ENCODE measurements at regions of chr2 and their contacts with region 1.

Region 1: DNA sequence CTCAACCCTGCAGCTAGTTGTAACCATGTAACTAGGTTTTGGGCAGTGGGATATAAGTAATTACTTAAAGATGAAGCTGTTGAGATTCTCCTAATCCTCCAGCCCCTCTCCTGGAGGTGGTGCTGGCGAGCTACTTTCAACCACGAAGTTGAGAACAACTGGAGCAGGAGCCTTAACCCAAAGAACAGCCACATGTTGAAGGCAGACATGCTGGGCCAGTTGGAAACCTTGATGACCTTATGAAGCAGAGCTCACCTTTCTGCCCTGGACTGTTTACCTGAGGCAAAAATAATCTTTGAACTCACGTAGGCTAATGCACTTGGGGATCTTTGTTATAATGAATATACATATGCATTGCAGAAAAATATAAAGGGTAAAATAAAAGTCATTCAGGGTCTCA is 89.6 kb upstream of the NPAS2 start:
- DNase-seq: peak; percentile 34
- H3K4me3 ChIP-seq: no peak overlapping the region
- H3K27ac ChIP-seq: no peak overlapping the region
- H3K27me3 ChIP-seq: peaks cover 6% of the 10 kb centered on the region
- CTCF ChIP-seq: peak; percentile 90

Region 2: GRCh38 chr2:100610381-100610831 is 119.9 kb before region 1 on chr2:
- CTCF ChIA-PET with region 1: interaction called, 15 read pairs
- POLR2A ChIA-PET with region 1: no interaction called
- DNase-seq: peak; percentile 15
- H3K4me3 ChIP-seq: no peak overlapping the region
- H3K27ac ChIP-seq: no peak overlapping the region
- H3K27me3 ChIP-seq: peaks cover 4% of the 10 kb centered on the region
- CTCF ChIP-seq: peak; percentile 74

Region 3: GRCh38 chr2:100692381-100692780 is 38.0 kb before region 1 on chr2:
- CTCF ChIA-PET with region 1: no interaction called
- POLR2A ChIA-PET with region 1: no interaction called
- DNase-seq: no peak
- H3K4me3 ChIP-seq: no peak overlapping the region
- H3K27ac ChIP-seq: no peak overlapping the region
- H3K27me3 ChIP-seq: peaks cover 11% of the 10 kb centered on the region
- CTCF ChIP-seq: no peak

Region 4: GRCh38 chr2:100742277-100743254 is 12.2 kb after region 1 on chr2:
- CTCF ChIA-PET with region 1: interaction called, 3 read pairs
- POLR2A ChIA-PET with region 1: interaction called, 11 read pairs
- DNase-seq: peak; percentile 94
- H3K4me3 ChIP-seq: peak overlapping the region; percentile 30
- H3K27ac ChIP-seq: peak overlapping the region; percentile 100
- H3K27me3 ChIP-seq: no peaks in the 10 kb centered on the region
- CTCF ChIP-seq: no peak

Region 5: GRCh38 chr2:100976645-100977391 is 246.5 kb after region 1 on chr2:
- CTCF ChIA-PET with region 1: interaction called, 30 read pairs
- POLR2A ChIA-PET with region 1: no interaction called
- DNase-seq: no peak
- H3K4me3 ChIP-seq: no peak overlapping the region
- H3K27ac ChIP-seq: peak overlapping the region; percentile 73
- H3K27me3 ChIP-seq: no peaks in the 10 kb centered on the region
- CTCF ChIP-seq: no peak

Region 6: DNA sequence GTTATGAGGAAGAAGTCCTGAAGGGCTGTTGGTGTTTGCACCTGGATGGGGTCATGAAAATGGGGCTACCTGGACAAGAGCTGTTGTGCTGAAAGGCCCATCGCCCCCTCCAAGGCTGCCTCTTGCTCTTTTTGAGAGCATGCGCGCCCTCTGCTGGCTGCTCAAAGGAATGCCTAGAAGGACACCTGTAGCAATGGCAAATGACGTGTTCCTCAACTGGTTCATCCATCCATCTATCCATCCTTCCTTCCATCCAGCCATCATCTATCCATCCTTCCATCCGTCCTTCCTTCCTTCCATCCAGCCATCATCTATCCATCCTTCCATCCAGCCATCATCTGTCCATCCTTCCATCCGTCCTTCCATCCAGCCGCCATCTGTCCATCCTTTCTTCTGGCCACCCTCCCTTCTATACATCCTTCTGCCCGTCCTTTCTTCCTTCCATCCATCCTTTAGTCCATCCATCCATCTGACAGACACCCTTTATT is 254.6 kb after region 1 on chr2:
- CTCF ChIA-PET with region 1: interaction called, 120 read pairs
- POLR2A ChIA-PET with region 1: no interaction called
- DNase-seq: peak; percentile 44
- H3K4me3 ChIP-seq: no peak overlapping the region
- H3K27ac ChIP-seq: no peak overlapping the region
- H3K27me3 ChIP-seq: no peaks in the 10 kb centered on the region
- CTCF ChIP-seq: peak; percentile 93

Region 7: DNA sequence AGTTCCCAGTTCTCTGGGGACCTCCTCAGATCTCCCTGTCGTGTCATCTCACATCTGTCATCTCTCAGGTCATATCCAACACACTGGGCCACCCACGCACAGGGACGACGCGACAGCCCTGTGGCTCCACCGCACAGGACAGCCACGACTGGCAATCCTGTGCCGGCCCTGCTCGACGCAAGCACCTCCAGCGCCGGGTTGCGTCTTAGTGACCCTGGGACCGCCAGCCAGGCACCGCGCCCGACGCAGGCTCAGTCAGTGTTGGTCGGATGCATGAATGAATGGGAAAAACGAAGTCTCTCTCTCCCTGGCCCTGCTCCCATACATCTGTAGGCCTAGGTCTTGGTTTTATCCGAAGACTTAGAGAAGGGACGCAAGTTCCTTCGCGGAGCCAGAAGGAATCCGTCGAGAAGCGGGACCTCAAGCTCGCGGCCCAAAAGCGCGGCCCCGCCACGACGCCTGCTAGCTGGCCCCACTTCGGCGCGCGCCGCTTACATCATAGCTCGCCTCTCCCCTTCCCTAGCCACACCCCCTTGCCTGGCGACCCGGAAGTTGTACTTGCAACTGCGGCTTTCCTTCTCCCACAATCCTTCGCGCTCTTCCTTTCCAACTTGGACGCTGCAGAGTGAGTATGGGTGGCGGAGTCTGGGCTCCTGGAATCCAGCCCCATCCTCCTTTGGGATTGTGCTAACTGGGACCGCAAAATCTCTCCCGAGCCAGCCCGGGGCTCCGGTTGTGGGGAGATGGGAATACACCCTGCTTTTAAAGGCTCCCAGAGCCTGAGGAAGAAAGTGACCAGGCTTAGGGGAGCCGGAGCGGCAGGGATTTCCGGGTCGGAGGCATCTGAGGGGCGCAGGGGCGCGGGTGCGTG is 271.6 kb after region 1 on chr2 and contains the start of gene RPL31:
- CTCF ChIA-PET with region 1: interaction called, 18 read pairs
- POLR2A ChIA-PET with region 1: interaction called, 5 read pairs
- DNase-seq: peak; percentile 90
- H3K4me3 ChIP-seq: peak within 1 kb of the TSS; percentile 96
- H3K27ac ChIP-seq: peak within 1 kb of the TSS; percentile 88
- H3K27me3 ChIP-seq: no peaks in the 10 kb centered on the region
- CTCF ChIP-seq: no peak
- polyA plus RNA-seq, gene RPL31: 2,534 and 2,992 TPM in 2 replicates

Region 8: DNA sequence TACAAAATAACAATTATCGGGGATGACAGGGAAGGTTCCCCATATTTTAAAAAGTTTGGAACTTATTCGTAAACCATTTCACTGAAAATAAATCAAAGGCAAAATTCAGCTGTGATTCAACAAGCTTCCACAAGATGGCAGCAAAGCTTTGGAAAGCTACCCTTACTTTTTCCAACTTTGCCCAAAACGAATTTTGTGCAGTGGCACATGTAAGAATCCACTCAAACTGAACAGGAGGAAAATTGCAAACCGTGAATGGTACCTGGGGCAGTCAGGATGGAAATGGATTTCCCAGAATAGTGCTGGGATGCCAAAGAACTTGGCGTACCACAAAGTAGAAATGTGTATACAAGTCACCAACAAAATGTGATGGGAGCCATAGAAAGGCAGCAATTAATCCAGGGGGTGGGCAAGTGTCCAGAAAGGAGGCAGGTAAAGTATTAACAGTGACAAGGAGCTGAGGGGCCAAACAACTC is 282.4 kb after region 1 on chr2:
- CTCF ChIA-PET with region 1: interaction called, 21 read pairs
- POLR2A ChIA-PET with region 1: no interaction called
- DNase-seq: no peak
- H3K4me3 ChIP-seq: no peak overlapping the region
- H3K27ac ChIP-seq: no peak overlapping the region
- H3K27me3 ChIP-seq: no peaks in the 10 kb centered on the region
- CTCF ChIP-seq: peak; percentile 83

Measured in AG04450 (cell line).